IMR-90 (cell line): ENCODE measurements at regions of chr20 and their contacts with region 1.

Region 1: GRCh38 chr20:63864847-63865640 is at the start of gene TPD52L2:
- DNase-seq: peak; percentile 97
- ATAC-seq: peak; percentile 87
- H3K4me3 ChIP-seq: peak within 1 kb of the TSS; percentile 69
- H3K27ac ChIP-seq: peak within 1 kb of the TSS; percentile 94
- H3K4me1 ChIP-seq: peaks cover 6% of the 10 kb centered on the region
- H3K27me3 ChIP-seq: no peaks in the 10 kb centered on the region
- CTCF ChIP-seq: no peak
- POLR2A ChIP-seq: peak; percentile 98
- RAD21 ChIP-seq: no peak
- total RNA-seq, gene TPD52L2: 113 and 119 TPM in 2 replicates

Region 2: GRCh38 chr20:63707549-63708300 is 157.3 kb before region 1 on chr20 and contains the starts of genes ARFRP1 and ZGPAT:
- CTCF ChIA-PET with region 1: no interaction called
- POLR2A ChIA-PET with region 1: no interaction called
- dilution Hi-C with region 1: no loop called
- in situ Hi-C with region 1: loop called (anchors 10 kb)
- intact Hi-C with region 1: loop called (anchors 2 kb)
- DNase-seq: peak; percentile 67
- ATAC-seq: peak; percentile 96
- H3K4me3 ChIP-seq: peak within 1 kb of the TSS; percentile 84
- H3K27ac ChIP-seq: peak within 1 kb of the TSS; percentile 82
- H3K4me1 ChIP-seq: peaks cover 10% of the 10 kb centered on the region
- H3K27me3 ChIP-seq: no peaks in the 10 kb centered on the region
- CTCF ChIP-seq: no peak
- POLR2A ChIP-seq: peak; percentile 57
- RAD21 ChIP-seq: no peak
- total RNA-seq, gene ARFRP1: 25.3 and 29.2 TPM in 2 replicates
- total RNA-seq, gene ZGPAT: 13.4 and 15.6 TPM in 2 replicates

Region 3: DNA sequence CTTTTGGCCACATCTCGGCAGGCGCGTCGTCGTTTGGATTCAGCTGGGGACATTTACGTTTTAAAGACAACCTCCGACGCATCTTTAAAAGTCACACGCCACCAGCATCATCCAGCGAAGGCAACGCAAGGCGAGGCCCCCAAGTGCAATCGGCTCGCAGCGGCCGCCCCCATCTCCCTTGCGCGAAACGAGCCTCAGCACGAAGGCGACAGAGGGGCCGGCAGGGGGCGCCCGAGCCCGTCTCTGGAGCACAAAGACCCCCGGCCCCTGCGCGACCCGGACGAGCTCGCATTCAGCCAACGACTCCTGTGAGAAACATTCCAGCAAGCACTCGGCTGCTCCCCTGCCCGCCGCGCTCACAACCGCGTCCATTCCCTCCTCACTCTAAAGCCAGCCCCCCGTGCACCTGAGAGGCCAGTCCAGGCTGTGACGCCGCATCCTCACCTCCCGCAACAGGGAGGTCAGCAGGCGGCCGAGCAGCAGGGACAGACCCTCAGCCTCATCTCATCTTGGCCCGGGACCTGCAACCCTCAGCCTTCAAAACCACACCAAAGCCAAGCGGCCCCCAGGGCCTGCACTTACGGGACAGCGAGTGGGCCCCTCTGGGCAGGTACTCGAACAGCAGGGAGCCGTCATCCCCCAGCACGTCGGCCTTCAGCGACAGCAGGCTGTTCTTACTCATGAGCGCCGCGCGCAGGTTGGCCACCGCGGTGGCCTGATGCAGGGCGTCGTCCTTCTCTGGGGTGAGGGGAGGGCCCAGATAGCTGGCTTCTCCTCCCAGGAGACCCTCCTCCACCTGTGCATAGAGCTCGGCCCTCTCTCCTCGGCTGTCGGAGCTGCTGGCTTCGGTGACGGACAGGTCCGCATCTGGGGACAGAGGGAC is 89.7 kb before region 1 on chr20:
- CTCF ChIA-PET with region 1: no interaction called
- POLR2A ChIA-PET with region 1: no interaction called
- dilution Hi-C with region 1: no loop called
- in situ Hi-C with region 1: no loop called
- intact Hi-C with region 1: loop called (anchors 1 kb)
- DNase-seq: peak; percentile 19
- ATAC-seq: peak; percentile 71
- H3K4me3 ChIP-seq: peak overlapping the region; percentile 18; the same call in 1 of the 2 replicates
- H3K27ac ChIP-seq: no peak overlapping the region
- H3K4me1 ChIP-seq: peaks cover 8% of the 10 kb centered on the region
- H3K27me3 ChIP-seq: no peaks in the 10 kb centered on the region
- CTCF ChIP-seq: peak; percentile 67
- POLR2A ChIP-seq: no peak
- RAD21 ChIP-seq: peak; percentile 61

Region 4: DNA sequence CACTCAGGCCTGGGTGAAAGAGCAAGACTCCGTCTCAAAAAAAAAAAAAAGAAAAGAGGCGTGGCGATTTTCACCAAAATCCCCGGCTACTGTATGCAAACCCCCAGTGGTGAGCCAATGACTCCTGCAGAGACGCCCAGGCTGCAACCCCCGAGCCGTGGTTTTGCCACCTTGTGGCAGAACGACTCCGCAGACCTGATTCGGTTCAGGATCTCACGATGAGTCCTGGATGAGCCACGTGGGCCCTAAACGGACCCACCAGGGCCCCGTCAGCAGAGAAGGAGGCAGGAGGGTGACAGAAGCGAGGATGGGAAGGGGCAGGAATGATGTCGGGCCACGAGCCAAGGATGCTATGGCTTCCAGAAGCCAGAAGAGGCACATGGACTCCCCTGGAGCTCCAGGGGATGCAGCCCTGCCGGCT is 83.0 kb before region 1 on chr20:
- CTCF ChIA-PET with region 1: no interaction called
- POLR2A ChIA-PET with region 1: no interaction called
- dilution Hi-C with region 1: no loop called
- in situ Hi-C with region 1: no loop called
- intact Hi-C with region 1: loop called (anchors 1 kb)
- DNase-seq: no peak
- ATAC-seq: no peak
- H3K4me3 ChIP-seq: no peak overlapping the region
- H3K27ac ChIP-seq: no peak overlapping the region
- H3K4me1 ChIP-seq: no peaks in the 10 kb centered on the region
- H3K27me3 ChIP-seq: no peaks in the 10 kb centered on the region
- CTCF ChIP-seq: no peak
- POLR2A ChIP-seq: no peak
- RAD21 ChIP-seq: no peak

Region 5: DNA sequence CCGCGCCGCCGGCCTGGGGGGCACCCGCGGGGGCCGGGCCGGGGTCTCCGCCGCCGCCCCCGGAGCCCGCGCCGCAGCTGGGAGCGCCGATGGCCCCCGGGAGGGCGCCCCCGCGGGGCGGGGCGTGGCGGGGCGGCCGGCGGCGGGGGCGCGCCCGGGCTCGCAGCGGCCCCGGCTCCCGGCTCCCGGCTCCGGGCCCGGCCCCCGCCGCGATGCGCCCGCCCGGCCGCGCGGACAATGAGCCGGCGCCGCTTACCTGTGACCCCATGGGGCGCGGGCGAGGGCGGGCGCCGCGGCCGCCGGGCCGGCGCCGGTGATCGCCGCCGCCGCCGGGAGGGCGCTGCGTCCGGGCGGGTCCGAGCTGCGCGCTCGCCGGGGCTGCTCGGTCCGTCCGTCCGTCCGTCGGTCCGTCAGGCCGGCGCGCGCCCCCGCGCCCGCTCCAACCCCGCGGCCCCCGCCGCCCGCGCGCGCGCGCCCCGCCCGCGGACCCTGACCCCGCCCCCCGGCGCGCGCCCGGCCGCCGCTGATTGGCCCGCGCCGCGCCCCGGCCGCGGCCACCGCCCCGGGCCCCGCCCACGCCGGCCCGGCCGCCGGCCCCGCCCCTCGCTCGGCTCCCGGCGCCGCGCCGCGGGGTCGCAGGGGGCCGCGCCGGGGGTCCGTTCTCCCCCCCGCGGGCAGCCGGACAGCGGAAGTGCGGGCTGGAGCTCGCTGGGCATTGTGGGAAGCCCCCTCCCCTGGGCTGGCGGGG is 34.0 kb before region 1 on chr20 and contains the start of gene ZBTB46:
- CTCF ChIA-PET with region 1: no interaction called
- POLR2A ChIA-PET with region 1: no interaction called
- dilution Hi-C with region 1: no loop called
- in situ Hi-C with region 1: no loop called
- intact Hi-C with region 1: loop called (anchors 1 kb)
- DNase-seq: peak; percentile 49
- ATAC-seq: peak; percentile 65
- H3K4me3 ChIP-seq: peak within 1 kb of the TSS; percentile 59
- H3K27ac ChIP-seq: peak within 1 kb of the TSS; percentile 34
- H3K4me1 ChIP-seq: peaks cover 40% of the 10 kb centered on the region
- H3K27me3 ChIP-seq: no peaks in the 10 kb centered on the region
- CTCF ChIP-seq: no peak
- POLR2A ChIP-seq: no peak
- RAD21 ChIP-seq: no peak
- total RNA-seq, gene ZBTB46: 14.9 and 15.3 TPM in 2 replicates